ENCODE measurements at regions of chr17 and their contacts with region 1.

Region 1: DNA sequence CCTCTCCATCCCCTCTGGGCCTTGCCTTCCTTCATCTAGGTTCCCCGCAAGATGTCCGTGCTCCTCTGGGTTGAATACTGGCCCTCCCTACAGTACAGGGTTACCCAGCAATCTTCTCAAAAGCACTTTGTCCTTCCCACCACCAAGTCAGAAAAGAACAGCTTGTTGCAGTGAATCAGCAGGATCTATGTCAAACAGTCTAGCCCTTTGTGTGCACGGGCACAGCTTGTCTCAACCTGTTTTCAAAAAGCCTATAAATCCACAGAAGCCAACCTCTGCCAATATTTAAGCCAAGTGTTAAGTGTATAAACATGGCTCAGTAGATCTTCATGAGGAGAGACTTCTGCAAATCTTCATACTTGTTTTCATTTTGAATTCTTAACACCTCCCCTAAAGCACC is 25.2 kb downstream of the C17orf67 start:
- DNase-seq: peak; percentile 69
- H3K4me3 Mint-ChIP-seq: no peak overlapping the region
- H3K27ac Mint-ChIP-seq: no peak overlapping the region
- H3K4me1 Mint-ChIP-seq: peaks cover 12% of the 10 kb centered on the region
- H3K27me3 Mint-ChIP-seq: no peaks in the 10 kb centered on the region
- CTCF ChIP-seq: no peak

Region 2: DNA sequence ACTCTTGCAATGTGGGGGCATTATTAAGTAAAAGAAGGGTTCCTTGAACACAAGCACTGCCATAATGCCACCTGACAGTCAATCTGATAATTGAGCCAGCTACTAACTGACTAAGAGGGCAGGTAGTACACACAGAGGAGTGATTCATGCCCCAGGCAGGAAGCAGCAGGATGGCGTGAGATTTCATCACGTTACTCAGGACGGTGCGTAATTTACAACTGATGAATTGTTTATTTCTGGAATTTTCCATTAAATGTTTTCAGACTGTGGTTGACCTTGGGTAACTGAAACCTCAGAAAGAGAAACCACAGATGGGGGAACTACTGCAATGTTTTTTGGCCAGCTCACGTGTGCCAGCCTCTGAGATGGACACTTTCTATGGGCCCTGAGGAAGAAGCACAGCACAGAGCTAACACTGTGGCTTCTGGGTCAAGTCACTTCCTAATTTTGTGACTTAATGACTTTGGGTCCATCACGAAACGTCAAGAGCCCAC is 21.5 kb before region 1 on chr17:
- CTCF ChIA-PET with region 1: interaction called, 4 read pairs
- POLR2A ChIA-PET with region 1: interaction called, 29 read pairs
- intact Hi-C with region 1: no loop called
- DNase-seq: peak; percentile 97
- H3K4me3 Mint-ChIP-seq: peak overlapping the region; percentile 61
- H3K27ac Mint-ChIP-seq: peak overlapping the region; percentile 96
- H3K4me1 Mint-ChIP-seq: peaks cover 40% of the 10 kb centered on the region
- H3K27me3 Mint-ChIP-seq: no peaks in the 10 kb centered on the region
- CTCF ChIP-seq: no peak

Region 3: DNA sequence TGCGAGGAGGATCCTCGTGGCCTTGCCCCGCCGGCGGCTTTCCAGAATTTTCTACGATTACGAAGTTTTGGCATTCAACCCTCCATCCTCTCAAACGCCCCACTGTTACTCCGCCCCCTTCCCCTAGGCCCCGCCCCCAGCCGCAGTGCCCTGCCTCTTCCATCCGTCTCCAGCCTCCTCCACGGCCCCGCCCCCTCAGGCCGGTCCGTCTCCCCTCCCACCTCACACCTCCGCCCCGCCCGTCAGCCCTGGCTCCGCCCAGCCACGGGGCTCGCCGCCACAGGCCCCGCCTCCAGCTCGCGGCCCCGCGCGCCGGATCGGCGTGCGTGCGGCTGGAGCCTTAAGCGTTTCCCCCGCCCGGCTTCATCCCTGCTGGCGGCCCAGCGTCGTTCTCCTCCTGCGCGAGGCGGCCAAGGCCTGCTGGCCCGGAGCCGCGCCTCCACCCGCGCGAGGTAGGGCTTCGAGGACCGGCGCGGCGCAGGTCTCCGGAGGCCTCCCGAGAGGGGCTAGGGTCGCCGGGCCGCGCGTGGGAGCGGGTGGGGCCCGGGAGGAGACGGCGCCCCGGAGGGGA is 25.4 kb after region 1 on chr17 and contains the starts of genes C17orf67 and DGKE:
- CTCF ChIA-PET with region 1: no interaction called
- POLR2A ChIA-PET with region 1: interaction called, 17 read pairs
- intact Hi-C with region 1: no loop called
- DNase-seq: peak; percentile 96
- H3K4me3 Mint-ChIP-seq: peak within 1 kb of the TSS; percentile 97
- H3K27ac Mint-ChIP-seq: peak within 1 kb of the TSS; percentile 66
- H3K4me1 Mint-ChIP-seq: peaks cover 47% of the 10 kb centered on the region
- H3K27me3 Mint-ChIP-seq: no peaks in the 10 kb centered on the region
- CTCF ChIP-seq: no peak
- total RNA-seq, gene C17orf67: 3.3 and 3.5 TPM in 2 replicates
- total RNA-seq, gene DGKE: 16.5 and 23.9 TPM in 2 replicates

Region 4: GRCh38 chr17:56960596-56961538 is 152.4 kb after region 1 on chr17 and contains the start of gene COIL:
- CTCF ChIA-PET with region 1: no interaction called
- POLR2A ChIA-PET with region 1: no interaction called
- intact Hi-C with region 1: no loop called
- DNase-seq: peak; percentile 89
- H3K4me3 Mint-ChIP-seq: peak within 1 kb of the TSS; percentile 73
- H3K27ac Mint-ChIP-seq: peak within 1 kb of the TSS; percentile 46
- H3K4me1 Mint-ChIP-seq: peaks cover 5% of the 10 kb centered on the region
- H3K27me3 Mint-ChIP-seq: no peaks in the 10 kb centered on the region
- CTCF ChIP-seq: peak; percentile 94
- total RNA-seq, gene COIL: 15.4 and 17.2 TPM in 2 replicates

Measured in MCF 10A (cell line).